Posterior cingulate gyrus (tissue), 11 donors: ENCODE measurements at regions of chr18 and their contacts with region 1.

Region 1: GRCh38 chr18:26865557-26865956 is at the start of gene AQP4:
- DNase-seq: peak in 4 of 10 donors; percentile 11 to 75 (median 57)

Region 2: DNA sequence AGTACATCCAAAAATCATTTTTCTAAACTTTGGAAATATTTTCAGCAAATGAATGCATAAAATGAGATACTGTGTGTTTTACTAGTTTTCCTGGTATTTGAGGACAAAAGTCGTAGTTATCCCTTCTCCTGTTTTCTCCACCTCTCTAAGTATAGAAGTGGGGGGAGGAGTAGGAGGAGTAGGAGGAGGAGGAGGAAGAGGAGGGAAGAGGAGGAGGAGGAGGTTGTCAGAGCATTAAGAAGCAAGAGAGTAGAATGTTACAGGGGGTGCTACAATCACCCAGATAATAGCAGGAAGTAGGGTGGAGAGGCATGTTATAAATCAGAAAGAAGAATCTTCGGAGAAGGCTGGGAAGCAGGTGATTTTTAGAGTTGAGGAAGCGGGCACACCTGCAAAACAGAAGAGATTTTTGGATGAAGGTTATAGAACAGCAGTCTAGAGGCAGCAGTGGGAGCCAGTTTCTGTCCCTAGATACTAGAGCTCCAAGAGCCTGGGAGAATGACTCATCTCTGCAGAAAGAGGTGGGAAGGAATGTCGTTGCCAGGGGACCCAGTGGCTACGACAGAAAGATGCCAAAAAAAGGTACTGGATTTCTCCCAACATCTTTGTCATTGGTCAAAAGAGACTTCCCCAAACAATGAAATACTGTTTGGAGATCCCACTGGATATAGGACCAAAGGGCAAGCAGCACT is 44.2 kb after region 1 on chr18:
- intact Hi-C with region 1: loop called (anchors 5 kb)
- DNase-seq: peak in 6 of 10 donors; percentile 18 to 83 (median 22)

Region 3: DNA sequence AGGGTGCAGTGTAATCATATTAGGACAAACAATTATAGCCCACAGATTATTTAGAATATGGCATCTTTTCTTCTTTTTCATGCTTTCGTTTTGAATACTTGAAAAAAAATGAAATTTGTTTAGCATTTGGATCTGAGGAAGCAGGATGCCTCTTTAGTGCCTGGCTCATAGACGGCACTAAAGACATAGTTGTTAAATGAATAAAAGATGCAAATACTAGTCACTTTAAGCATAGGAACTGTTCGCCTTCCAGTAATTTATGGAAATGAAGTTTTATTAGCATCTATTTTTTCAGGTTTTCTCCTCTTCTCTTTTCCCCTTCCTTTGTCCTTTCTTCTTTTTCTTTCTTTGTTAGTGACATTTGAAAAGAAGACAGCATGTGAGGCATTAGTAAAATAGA is 239.2 kb after region 1 on chr18:
- intact Hi-C with region 1: no loop called
- DNase-seq: no peak